Breast epithelium (tissue), 4 donors: ENCODE measurements at regions of chr4 and their contacts with region 1.

Region 1: DNA sequence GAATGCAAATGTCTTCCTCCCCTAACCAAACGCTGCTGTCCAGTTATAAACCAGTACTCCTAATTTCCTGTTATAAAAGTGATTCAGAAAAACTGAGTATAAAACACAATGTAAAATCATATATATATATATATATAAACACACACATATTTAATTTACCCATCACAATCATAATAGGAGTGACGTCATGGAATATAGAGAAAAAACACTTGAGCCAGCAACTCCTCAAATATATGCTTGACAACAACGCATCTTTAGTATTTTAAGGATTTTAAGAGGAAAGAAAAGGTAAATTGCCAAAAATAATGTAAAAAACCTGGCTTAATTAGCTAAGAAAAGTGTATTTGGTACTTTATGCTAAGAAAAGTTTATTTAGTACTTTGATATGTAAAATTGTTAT is 2701.7 kb downstream of the PCDH7 start:
- DNase-seq: no peak
- H3K4me3 ChIP-seq: no peak overlapping the region
- H3K27ac ChIP-seq: no peak overlapping the region
- H3K4me1 ChIP-seq: no peaks in the 10 kb centered on the region
- H3K27me3 ChIP-seq: no peaks in the 10 kb centered on the region
- CTCF ChIP-seq: no peak
- POLR2A ChIP-seq: no peak

Region 2: DNA sequence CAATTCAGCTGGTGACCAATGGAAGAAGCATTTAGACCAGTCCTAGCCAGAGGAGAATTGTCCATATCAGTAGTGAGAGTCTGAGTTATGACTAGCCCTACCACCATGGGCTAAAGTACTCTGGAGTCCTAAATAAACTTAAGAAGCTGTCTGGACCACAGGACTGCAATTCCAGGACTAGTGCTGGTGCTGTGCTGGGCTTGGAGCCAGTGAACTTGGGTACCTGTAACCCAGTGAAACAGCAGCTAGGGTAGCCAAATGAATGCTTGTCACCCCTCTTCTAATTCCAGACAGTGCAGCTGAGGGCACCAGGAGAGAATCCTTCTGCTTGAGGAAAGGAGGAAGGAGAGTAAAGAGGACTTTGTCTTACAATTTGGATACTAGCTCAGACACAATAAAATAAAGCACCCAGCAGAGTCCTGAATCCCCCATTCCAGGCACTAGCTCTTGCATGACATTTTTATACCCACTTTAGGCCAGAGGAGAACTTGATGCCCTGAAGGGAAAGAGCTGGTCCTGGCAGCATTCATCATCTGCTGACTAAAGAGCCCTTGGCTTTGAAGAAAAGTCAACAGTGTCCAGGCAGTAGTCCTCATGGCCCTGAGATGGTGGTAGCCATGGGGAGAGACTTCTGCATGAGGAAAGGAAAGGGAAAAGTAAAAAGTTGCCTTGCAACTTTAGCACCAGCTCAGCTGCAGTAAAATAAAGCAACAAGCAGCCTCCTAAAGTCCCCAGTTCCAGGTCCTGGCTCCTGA is 26.0 kb before region 1 on chr4:
- intact Hi-C with region 1: loop called (anchors 2 kb)
- DNase-seq: no peak
- H3K4me3 ChIP-seq: no peak overlapping the region
- H3K27ac ChIP-seq: no peak overlapping the region
- H3K4me1 ChIP-seq: no peaks in the 10 kb centered on the region
- H3K27me3 ChIP-seq: no peaks in the 10 kb centered on the region
- CTCF ChIP-seq: no peak
- POLR2A ChIP-seq: no peak

Region 3: DNA sequence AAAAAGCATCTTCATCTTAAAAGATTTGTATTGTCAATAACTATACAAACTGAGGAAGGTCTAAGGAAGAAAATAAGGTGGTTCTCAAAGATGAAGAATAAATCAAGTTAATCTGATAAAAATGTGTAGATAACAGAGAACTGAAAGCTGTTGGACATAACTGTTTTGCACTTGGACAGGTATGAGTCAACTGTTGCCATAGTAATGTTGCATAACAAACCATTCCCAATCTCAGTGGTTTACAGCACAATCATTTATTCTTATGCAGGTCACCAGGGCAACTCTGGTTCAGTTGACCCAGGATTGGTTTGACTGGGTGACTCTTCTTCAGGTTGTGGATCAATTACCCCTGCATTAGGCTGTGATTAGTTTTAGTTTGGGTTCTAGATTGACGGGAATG is 624.7 kb after region 1 on chr4:
- intact Hi-C with region 1: no loop called
- DNase-seq: no peak
- H3K4me3 ChIP-seq: no peak overlapping the region
- H3K27ac ChIP-seq: no peak overlapping the region
- H3K4me1 ChIP-seq: no peaks in the 10 kb centered on the region
- H3K27me3 ChIP-seq: no peaks in the 10 kb centered on the region
- CTCF ChIP-seq: no peak
- POLR2A ChIP-seq: no peak